Spleen (tissue), 13 donors: ENCODE measurements at regions of chr20 and their contacts with region 1.

Region 1: DNA sequence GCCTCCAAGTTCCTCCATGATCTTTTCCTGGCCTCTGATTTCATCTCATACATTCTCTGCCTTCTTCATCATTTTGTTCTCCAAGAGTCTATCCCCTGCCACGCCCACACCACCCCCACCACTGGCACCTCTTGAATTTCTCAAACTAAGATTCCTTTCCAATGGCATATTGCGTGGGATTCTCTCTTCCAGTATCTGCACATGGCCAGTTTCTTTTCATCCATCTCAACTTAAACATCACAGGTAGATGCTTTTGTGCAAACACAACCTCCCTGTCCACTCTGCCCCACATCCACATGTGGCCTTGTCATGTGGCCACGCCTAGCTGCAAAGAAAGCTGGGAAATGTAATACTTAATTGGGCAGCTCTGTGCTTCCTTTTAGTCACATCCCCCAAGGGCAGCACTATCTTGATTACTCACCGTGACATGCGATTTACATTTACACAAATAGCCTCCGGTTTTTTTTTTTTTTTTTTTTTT is 33.4 kb upstream of the ZMYND8 start:
- DNase-seq: no peak
- H3K4me3 ChIP-seq: no peak overlapping the region
- H3K27ac ChIP-seq: peak overlapping the region in 3 of 8 donors; percentile 21 to 40 (median 36)
- H3K4me1 ChIP-seq: peaks cover 0 to 30% (median 11%) of the 10 kb centered on the region in 6 donors
- H3K27me3 ChIP-seq: no peaks in the 10 kb centered on the region
- CTCF ChIP-seq: no peak
- POLR2A ChIP-seq: no peak

Region 2: DNA sequence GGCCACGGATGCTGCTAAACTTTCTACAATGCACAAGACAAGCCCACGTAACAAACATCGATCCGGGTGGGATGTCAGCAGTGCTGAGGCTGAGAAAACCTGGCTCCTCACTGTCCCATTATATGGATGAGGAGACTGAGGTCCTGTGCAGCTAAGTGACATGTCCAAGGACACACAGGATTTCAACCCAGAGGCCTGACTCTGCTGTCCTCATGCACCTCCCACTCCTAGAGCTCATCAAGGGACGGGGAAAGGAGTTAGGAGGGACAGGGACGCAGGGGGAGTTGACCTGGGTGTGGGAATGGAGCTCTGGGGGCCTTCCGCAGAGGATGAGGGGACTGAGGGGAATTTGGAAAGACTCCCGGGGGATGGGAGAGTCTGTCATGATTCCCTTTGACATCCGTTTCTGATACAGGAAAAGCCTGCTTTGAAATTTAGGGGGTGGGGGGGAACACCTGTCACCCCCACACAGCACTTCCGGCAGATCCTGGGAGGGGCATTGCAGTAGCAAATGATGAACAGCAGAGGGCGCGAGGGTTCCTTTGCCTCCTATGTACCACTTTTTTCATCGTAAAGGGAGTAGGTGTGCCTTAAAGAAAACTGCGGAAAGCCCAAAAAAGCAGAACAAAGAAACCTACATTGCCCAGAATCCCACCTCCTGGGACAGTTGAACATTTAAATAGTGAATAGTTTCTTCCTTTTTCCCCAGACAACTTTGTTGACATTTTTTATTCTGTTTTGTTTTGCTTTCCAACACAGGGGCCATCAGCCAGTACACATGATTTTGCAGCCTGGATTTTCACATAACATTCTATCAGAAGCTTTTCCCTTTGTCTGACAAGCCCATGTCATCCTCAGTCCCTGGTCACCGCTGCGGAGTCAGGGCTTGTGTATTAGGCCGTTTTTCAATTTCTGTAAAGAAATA is 631.9 kb before region 1 on chr20:
- intact Hi-C with region 1: loop called (anchors 10 kb)
- DNase-seq: no peak
- H3K4me3 ChIP-seq: no peak overlapping the region
- H3K27ac ChIP-seq: no peak overlapping the region
- H3K4me1 ChIP-seq: peaks cover 0 to 6% (median 2%) of the 10 kb centered on the region in 6 donors
- H3K27me3 ChIP-seq: peaks cover 0 to 32% (median 0%) of the 10 kb centered on the region in 7 donors
- CTCF ChIP-seq: peak; percentile 36 to 90 (median 75)
- POLR2A ChIP-seq: no peak

Region 3: DNA sequence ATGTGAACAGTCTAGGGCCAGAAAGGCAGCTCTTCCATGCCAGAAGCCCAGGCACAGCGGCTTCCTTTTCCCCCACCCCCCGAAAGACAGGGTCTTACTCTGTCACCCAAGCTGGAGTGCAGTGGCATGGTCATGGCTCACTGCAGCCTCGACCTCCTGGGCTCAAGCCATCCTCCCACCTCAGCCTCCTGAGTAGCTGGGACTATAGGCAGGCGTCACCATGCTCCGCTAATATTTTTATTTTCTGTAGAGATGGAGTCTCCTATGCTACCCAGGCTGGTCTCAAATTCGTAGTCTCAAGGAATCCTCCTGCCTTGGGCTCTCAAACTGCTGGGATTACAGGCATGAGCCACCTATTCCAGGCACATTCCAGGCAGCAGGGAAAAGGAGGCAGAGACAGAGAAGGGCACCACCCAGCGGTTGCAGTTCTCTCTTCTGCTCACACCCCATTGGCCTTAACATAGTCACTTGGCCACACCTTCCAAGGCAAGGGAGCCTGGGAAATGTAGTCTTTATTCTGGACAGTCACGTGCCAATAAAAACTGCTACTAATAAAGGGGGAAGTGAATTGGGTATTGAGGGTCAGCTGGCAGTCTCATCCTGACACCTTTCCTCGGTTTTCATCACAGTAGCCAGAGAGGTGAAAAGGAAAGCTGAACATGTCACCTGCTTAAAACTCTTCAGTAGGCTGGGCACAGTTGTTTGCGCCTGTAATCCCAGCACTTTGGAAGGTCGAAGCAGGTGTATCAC is 239.3 kb before region 1 on chr20:
- intact Hi-C with region 1: no loop called
- DNase-seq: no peak
- H3K4me3 ChIP-seq: no peak overlapping the region
- H3K27ac ChIP-seq: no peak overlapping the region
- H3K4me1 ChIP-seq: no peaks in the 10 kb centered on the region
- H3K27me3 ChIP-seq: peaks cover 0 to 33% (median 0%) of the 10 kb centered on the region in 7 donors
- CTCF ChIP-seq: peak in 10 of 11 experiments; percentile 25 to 71 (median 50)
- POLR2A ChIP-seq: no peak

Region 4: GRCh38 chr20:47272893-47273590 is 116.9 kb before region 1 on chr20:
- intact Hi-C with region 1: loop called (anchors 2 kb)
- DNase-seq: no peak
- H3K4me3 ChIP-seq: no peak overlapping the region
- H3K27ac ChIP-seq: peak overlapping the region in 7 of 8 donors; percentile 73 to 83 (median 79)
- H3K4me1 ChIP-seq: peaks cover 8 to 58% (median 37%) of the 10 kb centered on the region in 6 donors
- H3K27me3 ChIP-seq: no peaks in the 10 kb centered on the region
- CTCF ChIP-seq: peak; percentile 74 to 97 (median 86)
- POLR2A ChIP-seq: no peak

Region 5: DNA sequence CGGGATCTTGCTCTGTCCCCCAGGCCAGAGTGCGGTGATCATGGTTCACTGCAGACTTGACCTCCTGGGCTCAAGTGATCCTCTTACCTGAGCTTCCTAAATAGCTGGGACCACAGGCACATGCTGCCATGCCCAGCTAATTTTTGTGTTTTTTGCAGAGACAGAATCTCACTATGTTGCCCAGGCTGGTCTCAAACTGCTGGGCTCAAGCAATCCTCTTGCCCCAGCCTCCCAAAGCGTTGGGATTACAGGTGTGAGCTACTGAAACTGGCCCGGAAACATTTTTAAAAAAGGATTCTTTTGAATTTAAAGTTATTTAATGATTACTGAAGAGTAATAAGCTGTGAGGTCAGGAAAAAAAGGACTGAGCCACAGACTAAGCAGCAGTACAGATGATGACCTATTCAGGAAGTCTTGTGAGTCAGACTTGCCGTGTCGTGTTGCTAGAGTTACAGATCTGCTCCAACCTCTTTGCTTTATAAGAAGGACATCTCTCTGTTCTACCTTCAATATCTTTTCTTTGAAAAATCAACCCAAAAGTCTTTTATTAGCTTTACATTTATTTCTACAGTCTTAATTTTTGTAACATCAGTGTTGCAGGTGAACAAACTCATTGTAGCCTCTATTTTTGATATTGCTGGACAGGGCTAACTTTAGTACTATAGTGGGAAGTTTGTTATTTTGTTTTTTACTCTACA is 220.5 kb after region 1 on chr20:
- intact Hi-C with region 1: no loop called
- DNase-seq: no peak
- H3K4me3 ChIP-seq: no peak overlapping the region
- H3K27ac ChIP-seq: peak overlapping the region in 6 of 8 donors; percentile 20 to 59 (median 52)
- H3K4me1 ChIP-seq: peaks cover 21 to 100% (median 65%) of the 10 kb centered on the region in 6 donors
- H3K27me3 ChIP-seq: no peaks in the 10 kb centered on the region
- CTCF ChIP-seq: no peak
- POLR2A ChIP-seq: no peak

Region 6: DNA sequence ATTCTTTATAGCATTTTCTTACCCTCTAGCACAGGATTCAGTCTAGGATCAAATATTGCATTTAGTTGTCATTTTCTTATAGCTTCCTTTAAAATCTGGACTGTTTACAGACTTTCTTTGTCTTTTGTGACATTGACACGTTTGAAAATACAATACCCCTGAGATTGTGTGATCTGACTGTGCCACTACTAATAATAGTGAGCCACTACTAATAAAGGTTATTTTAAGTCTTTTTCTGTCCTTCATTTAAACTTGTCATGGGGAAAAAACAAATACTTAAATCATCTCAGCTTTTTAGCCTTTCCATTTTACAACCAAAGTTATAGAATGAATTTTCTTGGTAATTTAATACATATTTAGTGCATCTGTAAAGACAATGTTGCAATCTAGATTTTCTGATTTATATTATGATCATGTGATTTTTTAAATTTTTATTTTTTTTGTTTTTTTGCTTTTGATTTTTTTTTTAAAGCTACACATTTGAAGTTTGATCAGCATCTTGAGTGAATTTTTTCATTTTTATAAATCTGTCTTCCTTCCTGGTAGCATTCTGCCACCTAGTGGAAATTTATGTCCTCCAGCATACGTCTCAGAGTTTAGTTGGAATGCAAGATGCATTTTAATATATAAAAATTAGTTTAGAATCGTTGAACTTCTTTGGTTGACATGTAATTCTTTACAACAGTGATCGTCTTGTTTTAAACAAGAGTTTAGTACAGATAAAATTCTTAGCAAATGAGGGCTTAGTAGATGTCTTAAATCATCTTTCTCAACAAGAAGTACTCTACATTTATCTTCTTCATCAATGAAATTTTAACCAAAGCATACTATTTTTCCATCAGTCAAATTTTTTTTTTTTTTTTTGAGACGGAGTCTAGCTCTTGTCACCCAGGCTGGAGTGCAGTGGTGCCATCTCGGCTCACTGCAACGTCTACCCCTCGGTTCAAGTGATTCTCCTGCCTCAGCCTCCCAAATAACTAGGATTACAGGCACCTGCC is 231.2 kb after region 1 on chr20:
- intact Hi-C with region 1: loop called (anchors 5 kb)
- DNase-seq: no peak
- H3K4me3 ChIP-seq: no peak overlapping the region
- H3K27ac ChIP-seq: peak overlapping the region in 5 of 8 donors; percentile 1 to 33 (median 19)
- H3K4me1 ChIP-seq: peaks cover 5 to 62% (median 14%) of the 10 kb centered on the region in 6 donors
- H3K27me3 ChIP-seq: no peaks in the 10 kb centered on the region
- CTCF ChIP-seq: peak; percentile 58 to 84 (median 79)
- POLR2A ChIP-seq: no peak